Motor neuron (in vitro differentiated cells): ENCODE measurements at regions of chr20 and their contacts with region 1.

Region 1: DNA sequence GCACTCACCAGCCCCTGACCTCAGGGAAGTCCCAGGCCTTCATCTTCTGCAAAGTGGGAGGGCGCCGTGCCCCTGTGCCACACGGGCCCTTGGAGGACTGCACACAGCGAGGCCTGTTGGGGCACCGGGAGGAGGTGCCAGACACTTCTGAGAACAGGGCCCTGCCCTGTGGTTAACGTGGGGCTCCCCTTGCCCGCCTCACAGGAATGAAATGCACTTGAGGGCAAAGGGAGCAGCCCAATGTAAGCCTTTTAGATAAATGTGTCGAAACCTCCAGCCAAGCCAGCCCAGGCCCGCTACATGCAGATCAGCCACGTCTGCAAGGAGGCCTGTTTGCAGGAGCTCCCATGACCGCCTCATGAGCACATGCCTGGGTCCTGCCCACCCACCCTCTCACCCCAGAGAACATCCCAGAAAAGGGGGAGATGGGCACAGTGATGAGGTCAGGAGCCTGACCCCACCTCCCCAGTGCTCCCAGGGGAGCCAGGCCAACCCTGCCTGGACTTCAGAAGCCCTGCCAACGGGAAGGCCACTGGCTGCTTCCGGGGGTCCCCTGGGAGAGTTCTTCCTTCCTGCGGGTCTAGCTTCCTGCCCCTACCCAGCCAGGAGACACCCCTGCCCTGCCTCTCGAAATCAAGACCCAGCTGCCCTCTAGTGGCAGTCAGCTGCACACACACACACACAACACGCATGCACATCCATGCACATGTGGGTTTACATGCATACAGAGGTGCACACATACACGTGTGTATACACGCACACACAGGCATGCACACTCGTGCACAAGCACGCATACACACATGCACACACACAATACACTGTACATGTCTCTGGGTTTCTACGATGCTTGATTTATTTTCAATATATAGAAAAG is 178.7 kb downstream of the TAF4 start:
- ATAC-seq: peak; percentile 85 to 93 (median 86)
- H3K4me3 ChIP-seq: no peak overlapping the region
- H3K27ac ChIP-seq: no peak overlapping the region
- H3K4me1 ChIP-seq: peaks cover 13 to 18% of the 10 kb centered on the region in 2 donors

Region 2: GRCh38 chr20:60057123-60057801 is 1829.7 kb before region 1 on chr20:
- in situ Hi-C with region 1: loop called in 3 of 9 experiments (anchors 25 kb)
- ATAC-seq: peak in 7 of 8 experiments; percentile 15 to 92 (median 30)
- H3K4me3 ChIP-seq: no peak overlapping the region
- H3K27ac ChIP-seq: no peak overlapping the region
- H3K4me1 ChIP-seq: peaks cover 11 to 13% of the 10 kb centered on the region in 2 donors

Region 3: GRCh38 chr20:60851826-60852704 is 1034.9 kb before region 1 on chr20:
- in situ Hi-C with region 1: loop called in 2 of 9 experiments (anchors 25 kb)
- ATAC-seq: peak; percentile 44 to 78 (median 61)
- H3K4me3 ChIP-seq: no peak overlapping the region
- H3K27ac ChIP-seq: no peak overlapping the region
- H3K4me1 ChIP-seq: no peaks in the 10 kb centered on the region